AG04449 (cell line): ENCODE measurements at regions of chr20 and their contacts with region 1.

Region 1: GRCh38 chr20:38221119-38221589 is 39.4 kb downstream of the KIAA1755 start:
- DNase-seq: no peak
- H3K4me3 ChIP-seq: peak overlapping the region; percentile 36
- CTCF ChIP-seq: peak; percentile 97

Region 2: GRCh38 chr20:37564388-37565133 is 656.6 kb before region 1 on chr20:
- CTCF ChIA-PET with region 1: interaction called, 165 read pairs
- POLR2A ChIA-PET with region 1: no interaction called
- DNase-seq: no peak
- H3K4me3 ChIP-seq: no peak overlapping the region
- CTCF ChIP-seq: peak; percentile 97

Region 3: GRCh38 chr20:37990571-37991151 is 230.5 kb before region 1 on chr20:
- CTCF ChIA-PET with region 1: interaction called, 14 read pairs
- POLR2A ChIA-PET with region 1: no interaction called
- DNase-seq: no peak
- H3K4me3 ChIP-seq: no peak overlapping the region
- CTCF ChIP-seq: no peak

Region 4: GRCh38 chr20:38057351-38057972 is 163.7 kb before region 1 on chr20:
- CTCF ChIA-PET with region 1: interaction called, 1,143 read pairs
- POLR2A ChIA-PET with region 1: interaction called, 3 read pairs
- DNase-seq: no peak
- H3K4me3 ChIP-seq: no peak overlapping the region
- CTCF ChIP-seq: peak; percentile 77

Region 5: GRCh38 chr20:38143646-38144554 is 77.3 kb before region 1 on chr20:
- CTCF ChIA-PET with region 1: interaction called, 17 read pairs
- POLR2A ChIA-PET with region 1: no interaction called
- DNase-seq: peak; percentile 84
- H3K4me3 ChIP-seq: no peak overlapping the region
- CTCF ChIP-seq: no peak

Region 6: GRCh38 chr20:38242848-38243449 is 21.8 kb after region 1 on chr20:
- CTCF ChIA-PET with region 1: interaction called, 13 read pairs
- POLR2A ChIA-PET with region 1: no interaction called
- DNase-seq: no peak
- H3K4me3 ChIP-seq: no peak overlapping the region
- CTCF ChIP-seq: peak; percentile 47

Region 7: DNA sequence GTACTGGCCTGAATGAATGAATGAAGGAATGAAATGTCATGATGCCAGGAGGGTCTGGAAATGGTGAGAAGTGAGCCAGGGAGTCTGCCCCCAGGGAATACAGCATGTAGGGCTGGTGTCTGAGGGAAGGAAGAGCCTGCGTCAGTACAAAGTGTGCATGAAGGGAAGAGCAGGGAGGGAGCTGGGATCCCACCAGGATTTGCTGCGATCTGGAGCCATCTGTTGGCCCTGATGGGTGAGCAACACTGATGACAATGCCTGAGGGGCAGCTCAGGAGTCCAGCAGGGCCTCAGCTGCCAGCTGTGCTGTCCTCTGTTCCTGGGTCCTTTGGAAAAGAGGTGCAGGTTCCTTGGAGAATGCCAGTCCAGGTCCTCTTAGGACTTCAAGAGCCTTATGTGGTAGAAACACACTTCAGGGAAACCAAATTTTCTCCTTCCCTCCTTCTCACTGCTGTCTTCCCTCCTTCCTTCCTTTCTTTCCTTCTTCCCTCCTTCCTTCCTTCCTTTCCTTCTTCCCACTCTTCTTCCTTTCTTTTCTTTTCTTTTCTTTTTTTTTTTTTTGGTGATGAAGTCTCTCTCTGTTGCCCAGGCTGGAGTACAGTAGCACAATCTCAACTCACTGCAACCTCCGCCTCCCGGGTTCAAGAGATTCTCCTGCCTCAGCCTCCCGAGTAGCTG is 94.3 kb after region 1 on chr20:
- CTCF ChIA-PET with region 1: interaction called, 250 read pairs
- POLR2A ChIA-PET with region 1: no interaction called
- DNase-seq: peak; percentile 3
- H3K4me3 ChIP-seq: no peak overlapping the region
- CTCF ChIP-seq: peak; percentile 37

Region 8: DNA sequence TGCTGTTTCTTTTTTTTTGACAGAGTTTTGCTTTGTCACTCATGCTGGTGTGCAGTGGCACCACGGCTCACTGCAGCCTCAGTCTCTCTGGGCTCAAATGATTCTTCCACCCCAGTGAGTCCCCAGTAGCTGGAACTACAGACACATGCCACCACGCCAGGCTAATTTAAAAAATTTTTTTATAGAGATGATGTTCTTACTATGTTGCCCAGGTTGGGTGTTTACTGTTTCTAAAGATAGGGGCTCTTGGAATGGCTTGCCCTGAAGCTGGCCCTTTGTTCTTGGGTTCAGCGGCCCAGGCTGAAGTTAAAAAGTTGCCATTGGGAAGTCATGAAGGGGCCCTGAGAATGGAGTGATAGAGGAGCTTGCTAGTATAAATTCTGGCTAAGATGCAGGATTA is 268.0 kb after region 1 on chr20:
- CTCF ChIA-PET with region 1: no interaction called
- POLR2A ChIA-PET with region 1: no interaction called
- DNase-seq: no peak
- H3K4me3 ChIP-seq: no peak overlapping the region
- CTCF ChIP-seq: no peak